Activated CD8-positive, alpha-beta memory T cell treated with anti-CD3 and anti-CD28 coated beads, Interleukin-2, amount 10 ng/mL, durations not matched to agents 7 days and 5 days (primary cell): ENCODE measurements at regions of chr6 and their contacts with region 1.

Region 1: DNA sequence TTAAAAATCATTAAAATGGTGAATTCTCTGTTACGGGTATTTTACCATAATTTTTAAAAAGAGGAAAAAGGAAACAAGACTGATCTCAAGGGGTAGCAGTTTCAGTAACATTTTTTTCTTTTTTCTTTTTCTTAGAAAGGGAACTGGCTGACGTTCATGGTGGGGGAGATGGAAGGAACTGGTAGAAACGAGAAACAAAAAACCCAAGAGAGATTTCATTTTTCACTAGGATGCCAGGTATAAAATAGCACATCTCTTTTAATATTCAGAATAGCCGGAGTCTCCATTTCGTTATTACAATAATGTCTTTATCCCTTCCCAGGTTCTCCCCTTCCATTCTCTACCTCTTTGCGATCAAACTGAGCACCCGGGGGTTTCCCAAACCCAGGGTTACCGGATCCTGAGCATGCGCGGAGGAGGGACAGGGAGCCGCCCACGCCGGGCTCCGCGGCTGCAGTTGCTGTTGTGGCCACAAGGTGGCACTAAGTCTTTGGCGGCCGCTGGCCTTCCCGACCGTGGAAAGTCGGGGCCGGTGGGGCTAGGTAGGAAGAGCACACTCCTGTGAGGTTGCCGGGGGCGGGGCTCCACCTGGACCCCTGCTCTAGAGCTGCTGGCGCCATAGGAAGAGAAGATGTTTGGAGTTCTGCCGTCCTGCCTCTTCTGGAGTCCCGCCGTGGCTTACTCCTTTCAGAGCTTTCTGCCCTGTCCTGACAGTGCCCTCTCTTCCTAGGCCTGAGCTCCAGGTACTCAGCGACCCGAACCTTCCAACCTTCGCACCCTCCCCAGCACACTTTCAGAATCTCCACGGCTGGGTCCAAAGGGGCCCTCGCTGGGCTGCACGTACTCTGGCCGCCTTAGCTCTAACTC is 146.8 kb downstream of the SH3BGRL2 start:
- DNase-seq: peak; percentile 85
- ATAC-seq: peak; percentile 95
- H3K4me3 Mint-ChIP-seq: peak overlapping the region; percentile 67
- H3K27ac Mint-ChIP-seq: no peak overlapping the region
- H3K4me1 Mint-ChIP-seq: peaks cover 7% of the 10 kb centered on the region
- H3K27me3 Mint-ChIP-seq: no peaks in the 10 kb centered on the region

Region 2: DNA sequence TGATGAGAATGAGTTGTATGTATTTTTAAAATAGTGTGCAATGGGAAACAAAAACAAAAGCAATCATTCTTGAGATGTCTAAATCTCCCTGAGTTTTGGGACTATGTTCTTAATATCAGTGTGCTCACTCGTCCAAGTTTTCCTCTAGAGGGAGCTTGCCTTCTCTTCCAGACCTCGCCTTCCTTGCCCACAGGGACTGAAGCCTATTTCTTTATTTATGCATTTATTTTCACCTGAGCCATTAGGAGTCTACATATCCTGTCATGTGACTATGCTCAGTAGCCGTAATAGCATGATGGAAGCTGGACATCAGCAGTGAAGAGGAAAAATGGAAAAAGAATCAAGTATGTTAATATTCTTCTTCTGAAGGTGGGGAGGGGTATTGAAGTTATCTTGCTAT is 15.6 kb before region 1 on chr6:
- CTCF ChIA-PET with region 1: no interaction called
- DNase-seq: no peak
- ATAC-seq: no peak
- H3K4me3 Mint-ChIP-seq: no peak overlapping the region
- H3K27ac Mint-ChIP-seq: no peak overlapping the region
- H3K4me1 Mint-ChIP-seq: no peaks in the 10 kb centered on the region
- H3K27me3 Mint-ChIP-seq: peaks cover 7% of the 10 kb centered on the region

Region 3: DNA sequence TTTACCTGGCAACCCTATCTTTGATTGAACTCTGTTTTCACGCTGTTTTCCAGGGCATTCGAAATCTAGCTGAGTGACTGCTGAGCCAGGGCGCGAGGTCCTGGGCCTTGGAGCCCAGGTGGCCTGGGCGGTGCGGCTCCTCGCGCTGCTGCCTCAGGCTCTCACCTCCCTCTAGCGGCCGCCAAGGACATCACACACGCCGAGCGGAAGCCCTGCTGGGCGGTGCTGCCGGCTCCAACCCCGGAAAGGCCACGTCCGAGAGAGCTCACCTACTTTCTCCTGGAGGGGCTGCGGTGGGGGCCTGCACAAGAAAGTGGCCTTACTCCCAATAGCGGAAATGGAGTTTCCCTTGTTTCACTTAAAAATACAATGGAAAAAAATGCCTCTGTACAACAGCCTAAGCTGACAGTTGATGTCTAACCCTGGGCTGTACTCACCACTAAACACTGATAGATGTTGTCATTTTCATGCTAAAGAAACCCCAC is 91.7 kb after region 1 on chr6:
- CTCF ChIA-PET with region 1: interaction called, 44 read pairs
- DNase-seq: peak; percentile 88
- ATAC-seq: peak; percentile 100
- H3K4me3 Mint-ChIP-seq: peak overlapping the region; percentile 23
- H3K27ac Mint-ChIP-seq: peak overlapping the region; percentile 62
- H3K4me1 Mint-ChIP-seq: peaks cover 14% of the 10 kb centered on the region
- H3K27me3 Mint-ChIP-seq: peaks cover 21% of the 10 kb centered on the region